Activated B cell treated with CpG ODN at 0.5 μM for 24 hours (primary cell): ENCODE measurements at regions of chr5 and their contacts with region 1.

Region 1: DNA sequence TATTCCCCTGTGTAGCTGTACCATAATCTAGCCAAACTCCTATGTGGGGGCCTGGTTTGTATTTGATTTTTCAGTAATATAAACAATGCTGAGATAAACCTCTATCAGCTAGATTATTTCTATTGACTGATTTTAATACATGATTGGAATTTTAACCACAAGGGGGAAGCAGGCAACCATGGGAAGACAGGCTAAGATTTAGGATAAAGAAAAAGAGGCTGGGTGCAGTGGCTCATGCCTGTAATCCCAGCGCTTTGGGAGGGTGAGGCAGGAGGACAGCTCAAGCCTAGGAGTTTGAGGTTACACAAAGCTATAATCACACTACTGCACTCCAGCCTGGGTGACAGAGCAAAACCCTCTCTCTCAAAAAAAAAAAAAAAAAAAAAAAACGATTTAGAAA is 18.1 kb upstream of the GPX3 start:
- DNase-seq: no peak
- ATAC-seq: no peak
- H3K4me3 Mint-ChIP-seq: no peak overlapping the region
- H3K27ac Mint-ChIP-seq: no peak overlapping the region
- H3K4me1 Mint-ChIP-seq: no peaks in the 10 kb centered on the region
- H3K27me3 Mint-ChIP-seq: peaks cover 3% of the 10 kb centered on the region
- CTCF ChIP-seq: no peak

Region 2: GRCh38 chr5:150931368-150931965 is 70.8 kb before region 1 on chr5:
- CTCF ChIA-PET with region 1: no interaction called
- POLR2A ChIA-PET with region 1: no interaction called
- intact Hi-C with region 1: no loop called
- DNase-seq: no peak
- ATAC-seq: no peak
- H3K4me3 Mint-ChIP-seq: no peak overlapping the region
- H3K27ac Mint-ChIP-seq: no peak overlapping the region
- H3K4me1 Mint-ChIP-seq: no peaks in the 10 kb centered on the region
- H3K27me3 Mint-ChIP-seq: no peaks in the 10 kb centered on the region
- CTCF ChIP-seq: no peak

Region 3: DNA sequence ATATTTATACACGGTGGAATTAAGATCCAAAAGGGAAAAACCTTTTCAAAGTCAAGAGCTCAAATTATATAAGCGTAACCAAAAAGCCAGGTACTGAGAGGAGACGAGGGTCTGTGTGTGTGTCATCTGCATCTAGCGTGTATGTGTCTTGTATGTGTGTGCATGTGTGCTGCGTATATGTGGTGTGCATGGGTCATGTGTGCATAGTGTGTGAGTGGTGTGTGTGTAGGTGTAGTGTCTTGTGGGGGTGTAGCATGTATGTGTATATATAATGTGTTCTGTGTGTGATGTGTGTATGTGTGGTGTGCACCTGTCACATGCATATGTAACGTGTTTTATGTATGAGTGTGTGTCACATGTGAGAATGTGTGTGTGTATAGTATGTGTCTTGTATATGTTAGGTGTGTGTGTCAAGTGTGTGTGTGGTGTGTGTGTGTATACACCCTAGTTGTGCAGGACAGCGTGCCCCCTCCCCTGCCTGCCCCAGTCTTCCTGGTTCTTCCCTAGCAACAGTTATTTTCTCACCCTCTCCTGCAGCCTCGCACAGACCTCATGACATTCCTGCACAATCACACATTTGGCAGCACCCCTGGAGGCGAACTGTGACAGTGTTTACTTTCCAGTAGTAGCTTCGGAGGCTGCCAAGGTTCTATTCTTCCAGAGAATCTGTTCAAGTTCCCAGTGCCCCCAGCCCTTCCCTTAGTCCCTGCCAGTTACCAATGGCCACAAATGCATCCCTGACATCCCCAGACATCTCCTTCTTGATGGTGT is 105.7 kb after region 1 on chr5:
- CTCF ChIA-PET with region 1: no interaction called
- POLR2A ChIA-PET with region 1: no interaction called
- intact Hi-C with region 1: no loop called
- DNase-seq: no peak
- ATAC-seq: no peak
- H3K4me3 Mint-ChIP-seq: no peak overlapping the region
- H3K27ac Mint-ChIP-seq: no peak overlapping the region
- H3K4me1 Mint-ChIP-seq: peaks cover 23% of the 10 kb centered on the region
- H3K27me3 Mint-ChIP-seq: no peaks in the 10 kb centered on the region
- CTCF ChIP-seq: no peak

Region 4: GRCh38 chr5:151509231-151509630 is 507.0 kb after region 1 on chr5:
- CTCF ChIA-PET with region 1: no interaction called
- POLR2A ChIA-PET with region 1: no interaction called
- intact Hi-C with region 1: loop called (anchors 10 kb)
- DNase-seq: no peak
- ATAC-seq: peak; percentile 71
- H3K4me3 Mint-ChIP-seq: no peak overlapping the region
- H3K27ac Mint-ChIP-seq: peak overlapping the region; percentile 30
- H3K4me1 Mint-ChIP-seq: peaks cover 10% of the 10 kb centered on the region
- H3K27me3 Mint-ChIP-seq: no peaks in the 10 kb centered on the region
- CTCF ChIP-seq: no peak

Region 5: DNA sequence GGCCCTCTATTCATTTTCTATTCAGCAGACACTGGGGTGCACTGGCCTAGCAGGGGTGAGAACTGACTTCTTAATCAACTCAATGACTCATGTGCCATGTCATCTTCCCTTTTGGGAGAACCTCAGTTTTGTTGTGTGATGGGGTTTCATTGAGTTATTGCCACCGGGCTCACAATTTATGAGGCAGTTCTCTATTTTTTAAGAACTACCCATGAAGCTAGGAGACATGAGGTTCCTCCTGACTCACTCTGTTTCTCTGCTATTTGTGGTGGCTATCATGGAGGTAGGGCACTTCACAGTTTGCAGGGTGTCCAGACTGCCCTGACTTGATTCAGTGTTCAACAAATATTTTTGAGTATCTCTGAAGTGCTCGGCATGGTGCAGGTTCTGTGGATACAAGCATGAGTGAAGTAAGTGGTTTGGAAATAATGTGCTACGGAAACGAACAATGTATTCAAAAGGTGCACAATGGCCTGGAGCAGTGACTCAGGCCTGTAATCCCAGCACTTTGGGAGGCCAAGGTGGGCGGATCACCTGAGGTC is 645.1 kb after region 1 on chr5:
- CTCF ChIA-PET with region 1: no interaction called
- POLR2A ChIA-PET with region 1: no interaction called
- intact Hi-C with region 1: no loop called
- DNase-seq: no peak
- ATAC-seq: no peak
- H3K4me3 Mint-ChIP-seq: no peak overlapping the region
- H3K27ac Mint-ChIP-seq: no peak overlapping the region
- H3K4me1 Mint-ChIP-seq: no peaks in the 10 kb centered on the region
- H3K27me3 Mint-ChIP-seq: peaks cover 13% of the 10 kb centered on the region
- CTCF ChIP-seq: no peak